HepG2 (cell line): ENCODE measurements at regions of chr10 and their contacts with region 1.

Region 1: DNA sequence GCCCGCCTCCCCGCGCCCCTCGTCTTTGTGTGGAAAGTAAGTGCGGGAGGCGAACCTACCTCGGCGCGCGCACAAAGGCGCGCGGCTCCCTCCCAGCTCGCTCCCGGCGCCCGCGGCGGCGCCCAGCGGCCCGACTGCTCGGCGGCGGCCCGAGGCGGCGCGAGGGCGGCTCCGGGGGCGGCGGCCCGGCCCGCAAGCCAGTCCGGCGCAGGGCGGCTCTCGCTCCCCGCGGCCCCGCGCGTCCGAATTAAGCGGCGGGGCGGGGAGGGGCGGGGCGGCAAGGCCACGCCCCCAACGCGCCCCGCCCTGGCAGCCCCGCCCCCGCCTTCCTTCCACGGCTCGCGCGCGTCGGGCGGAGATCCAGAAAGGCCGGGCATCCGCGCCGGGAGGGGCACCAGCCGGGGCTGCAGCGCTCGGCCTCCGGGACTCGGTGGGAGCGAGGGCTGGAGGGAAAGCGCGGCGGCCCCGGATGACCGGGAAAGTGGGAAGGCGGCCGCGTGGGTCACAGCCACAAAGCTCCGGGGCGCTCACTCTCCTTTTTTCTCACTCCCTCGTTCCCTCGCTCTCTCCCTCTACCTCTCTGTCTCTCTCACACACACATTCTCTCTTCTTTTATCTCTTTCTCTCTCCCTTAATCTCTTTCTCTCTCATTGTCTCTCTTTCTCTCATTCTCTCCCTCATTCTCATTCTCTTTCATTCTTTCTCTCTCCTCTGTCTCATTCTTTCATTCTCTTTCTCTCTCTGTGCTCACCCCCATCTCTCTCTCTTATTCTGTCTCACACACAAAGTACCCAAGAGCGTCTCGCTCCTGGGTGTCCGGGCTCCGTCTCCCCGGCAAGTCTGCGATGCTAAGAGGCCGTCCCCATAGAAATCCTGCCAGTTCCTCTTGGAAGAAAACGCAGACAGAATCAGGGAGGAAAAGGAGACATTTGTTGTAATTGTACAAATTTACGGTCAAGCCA is 170.2 kb downstream of the FAM107B start:
- DNase-seq: no peak
- ATAC-seq: peak; percentile 79
- H3K4me3 ChIP-seq: peak overlapping the region; percentile 38 to 91 (median 74); a peak in 5 of 6 replicates
- H3K27ac ChIP-seq: no peak overlapping the region
- H3K4me1 ChIP-seq: peaks cover 71% of the 10 kb centered on the region
- H3K27me3 ChIP-seq: no peaks in the 10 kb centered on the region
- CTCF ChIP-seq: no peak
- EP300 ChIP-seq: no peak
- POLR2A ChIP-seq: peak in 1 of 2 experiments; percentile 73; a peak in 2 of 4 replicates
- RAD21 ChIP-seq: no peak

Region 2: GRCh38 chr10:13586676-13587355 is 1017.6 kb before region 1 on chr10 and contains the start of gene PRPF18:
- CTCF ChIA-PET with region 1: no interaction called
- POLR2A ChIA-PET with region 1: no interaction called
- in situ Hi-C with region 1: no loop called
- intact Hi-C with region 1: no loop called
- DNase-seq: peak; percentile 92
- ATAC-seq: peak; percentile 97
- H3K4me3 ChIP-seq: peak within 1 kb of the TSS; percentile 69 to 95 (median 89)
- H3K27ac ChIP-seq: peak within 1 kb of the TSS; percentile 25
- H3K4me1 ChIP-seq: peaks cover 32% of the 10 kb centered on the region
- H3K27me3 ChIP-seq: peaks cover 0 to 8% of the 10 kb centered on the region in 2 experiments; a peak in 1 of 5 replicates
- CTCF ChIP-seq: peak; percentile 94
- EP300 ChIP-seq: peak in 1 of 2 experiments; percentile 19; a peak in 1 of 4 replicates
- POLR2A ChIP-seq: peak; percentile 71
- RAD21 ChIP-seq: no peak; the same call in 1 of the 2 replicates
- total RNA-seq, gene PRPF18: 17.2 and 24.7 TPM in 2 replicates

Region 3: DNA sequence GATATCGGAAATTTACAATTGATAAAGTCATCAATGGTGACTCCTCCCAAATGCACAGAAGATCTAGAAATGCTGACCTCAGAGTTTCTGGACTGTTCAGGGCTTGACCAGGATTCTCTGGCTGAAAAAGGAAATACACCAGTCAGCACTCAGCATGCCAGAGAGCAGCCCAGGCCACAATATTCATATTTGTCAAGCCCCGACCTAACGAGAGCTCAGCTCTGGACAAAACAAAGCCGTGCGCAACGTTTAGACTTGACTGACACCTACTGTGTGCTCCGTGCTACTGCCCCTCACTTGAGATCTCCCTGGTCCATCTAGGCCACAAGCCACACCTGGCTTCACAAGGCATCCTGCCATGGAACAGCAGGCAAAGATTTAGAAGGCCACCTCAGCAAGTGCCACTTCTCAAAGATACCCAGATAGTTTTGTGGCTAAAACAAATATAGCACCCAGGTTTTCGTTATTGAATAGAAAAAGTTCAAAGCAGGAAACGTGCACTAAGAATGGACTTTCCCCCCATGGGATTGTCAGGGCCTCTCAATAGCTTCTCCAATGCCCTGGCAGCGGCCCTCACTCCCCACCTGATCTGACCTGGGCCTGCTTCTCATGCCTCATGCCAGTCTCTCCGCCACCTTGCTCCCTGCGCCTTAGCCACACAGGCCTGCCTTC is 48.0 kb before region 1 on chr10:
- CTCF ChIA-PET with region 1: no interaction called
- POLR2A ChIA-PET with region 1: no interaction called
- in situ Hi-C with region 1: no loop called
- intact Hi-C with region 1: loop called (anchors 5 kb)
- DNase-seq: peak; percentile 68
- ATAC-seq: peak; percentile 88
- H3K4me3 ChIP-seq: peak overlapping the region in 1 of 3 experiments; percentile 21; a peak in 1 of 6 replicates
- H3K27ac ChIP-seq: peak overlapping the region; percentile 41
- H3K4me1 ChIP-seq: peaks cover 67% of the 10 kb centered on the region
- H3K27me3 ChIP-seq: no peaks in the 10 kb centered on the region
- CTCF ChIP-seq: peak; percentile 81
- EP300 ChIP-seq: no peak
- POLR2A ChIP-seq: no peak
- RAD21 ChIP-seq: peak; percentile 35; the same call in 1 of the 2 replicates